Activated T-helper 1 cell treated with anti-CD3 and anti-CD28 coated beads, Interleukin-12 subunit alpha, Interleukin-12 subunit beta, Interleukin-2, Interleukin-4 antibody, amounts not matched to agents 30 ng/mL and 10 ng/mL and 1 ng/mL, durations not matched to agents 14 hours and 24 hours and 36 hours (primary cell): ENCODE measurements at regions of chr4 and their contacts with region 1.

Region 1: GRCh38 chr4:53015681-53016080 is 153.6 kb downstream of the RASL11B start:
- DNase-seq: no peak
- H3K4me3 Mint-ChIP-seq: no peak overlapping the region
- H3K27ac Mint-ChIP-seq: no peak overlapping the region
- H3K4me1 Mint-ChIP-seq: peaks cover 24% of the 10 kb centered on the region
- H3K27me3 Mint-ChIP-seq: no peaks in the 10 kb centered on the region

Region 2: GRCh38 chr4:52659001-52659721 is 356.5 kb before region 1 on chr4 and contains the start of gene USP46:
- intact Hi-C with region 1: no loop called
- DNase-seq: peak; percentile 30
- H3K4me3 Mint-ChIP-seq: peak within 1 kb of the TSS; percentile 86
- H3K27ac Mint-ChIP-seq: peak within 1 kb of the TSS; percentile 73
- H3K4me1 Mint-ChIP-seq: peaks cover 28% of the 10 kb centered on the region
- H3K27me3 Mint-ChIP-seq: peaks cover 14% of the 10 kb centered on the region
- total RNA-seq, gene USP46: 9.9 and 10.1 TPM in 2 replicates

Region 3: GRCh38 chr4:53037892-53038291 is 22.2 kb after region 1 on chr4:
- intact Hi-C with region 1: loop called (anchors 2 kb)
- DNase-seq: no peak
- H3K4me3 Mint-ChIP-seq: no peak overlapping the region
- H3K27ac Mint-ChIP-seq: no peak overlapping the region
- H3K4me1 Mint-ChIP-seq: peaks cover 6% of the 10 kb centered on the region
- H3K27me3 Mint-ChIP-seq: no peaks in the 10 kb centered on the region

Region 4: DNA sequence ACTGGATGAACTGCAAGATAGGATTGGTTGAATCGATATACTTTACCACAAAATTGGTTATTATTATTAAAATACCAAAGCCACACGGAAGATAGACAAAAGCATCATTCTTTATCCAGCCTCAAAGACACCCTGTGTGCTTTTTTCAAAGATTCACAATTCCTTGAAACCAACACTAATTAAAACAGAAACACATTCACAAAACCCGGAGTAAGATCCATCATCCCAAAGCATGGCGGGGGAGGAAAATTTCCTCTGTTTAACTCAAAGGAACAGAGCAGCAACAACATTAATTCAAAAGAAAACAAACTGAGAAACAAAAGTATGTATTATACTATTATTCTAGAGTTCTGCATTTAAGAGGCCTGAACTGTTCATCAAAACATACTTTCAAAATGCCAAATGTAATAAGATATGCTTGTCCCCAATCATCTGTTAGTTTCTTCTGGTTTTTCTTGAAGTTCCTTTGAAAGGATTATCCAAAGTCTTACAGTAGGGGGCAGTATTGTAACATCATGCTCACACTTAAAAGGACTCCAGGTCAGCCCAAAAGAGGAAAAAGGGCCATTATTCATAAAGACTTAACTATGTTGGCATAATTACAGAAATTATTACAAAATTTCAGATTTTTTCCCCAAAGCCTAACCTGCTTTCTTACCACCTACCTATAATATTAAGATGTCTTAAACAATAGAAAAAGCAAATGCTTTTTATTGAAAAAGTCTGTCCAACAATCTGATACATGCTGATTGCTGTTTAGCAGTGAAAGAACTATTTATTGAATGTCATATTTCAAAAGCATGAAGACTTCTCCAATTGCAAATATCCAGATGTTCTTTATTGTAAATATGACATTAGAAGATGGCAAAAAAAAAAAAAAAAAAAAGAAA is 181.4 kb after region 1 on chr4:
- intact Hi-C with region 1: loop called (anchors 1 kb)
- DNase-seq: no peak
- H3K4me3 Mint-ChIP-seq: no peak overlapping the region
- H3K27ac Mint-ChIP-seq: no peak overlapping the region
- H3K4me1 Mint-ChIP-seq: peaks cover 4% of the 10 kb centered on the region
- H3K27me3 Mint-ChIP-seq: no peaks in the 10 kb centered on the region

Region 5: DNA sequence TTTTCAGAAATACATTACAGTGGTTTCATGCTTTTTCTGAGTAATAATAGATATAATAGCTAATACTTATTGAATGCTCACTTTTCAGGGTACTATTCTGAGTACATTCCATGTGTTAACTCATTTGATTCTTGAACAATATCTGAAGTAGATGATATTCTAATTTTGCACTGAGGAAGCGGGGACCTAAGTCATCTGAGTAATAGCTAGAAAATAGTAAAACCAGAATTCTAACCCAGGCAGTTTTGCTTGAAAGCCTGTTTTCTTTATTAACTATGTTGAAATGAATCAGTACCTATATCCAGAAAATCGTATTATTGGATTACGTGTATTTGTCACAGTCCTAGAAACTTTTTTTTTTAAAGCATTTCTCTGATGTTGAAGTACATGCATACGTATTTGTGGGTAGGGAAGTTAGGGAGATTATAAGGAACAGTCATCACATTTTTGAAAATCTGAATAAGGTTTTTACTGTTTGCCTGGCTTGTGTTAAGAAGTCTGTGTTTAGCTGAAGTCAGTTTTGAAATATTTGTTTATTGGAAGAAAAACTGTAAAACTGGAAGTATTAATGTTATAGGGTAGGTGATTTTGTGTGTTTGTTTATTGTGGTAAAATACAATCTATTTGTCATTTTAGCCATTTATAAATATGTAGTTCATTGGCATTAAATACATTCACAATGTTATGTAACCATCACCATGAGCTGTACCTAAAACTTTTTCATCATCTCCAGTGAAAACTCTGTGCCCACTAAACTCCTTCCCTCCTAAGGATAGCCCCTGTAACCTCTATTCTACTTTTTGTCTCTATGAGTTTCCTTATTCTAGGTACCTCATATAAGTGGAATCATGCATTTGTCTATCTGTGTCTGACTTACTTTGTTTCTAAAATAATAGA is 417.1 kb after region 1 on chr4:
- intact Hi-C with region 1: loop called (anchors 10 kb)
- DNase-seq: no peak
- H3K4me3 Mint-ChIP-seq: no peak overlapping the region
- H3K27ac Mint-ChIP-seq: no peak overlapping the region
- H3K4me1 Mint-ChIP-seq: peaks cover 19% of the 10 kb centered on the region
- H3K27me3 Mint-ChIP-seq: no peaks in the 10 kb centered on the region

Region 6: GRCh38 chr4:53908661-53909078 is 893.0 kb after region 1 on chr4:
- intact Hi-C with region 1: loop called (anchors 10 kb)
- DNase-seq: no peak
- H3K4me3 Mint-ChIP-seq: no peak overlapping the region
- H3K27ac Mint-ChIP-seq: no peak overlapping the region
- H3K4me1 Mint-ChIP-seq: peaks cover 17% of the 10 kb centered on the region
- H3K27me3 Mint-ChIP-seq: peaks cover 30% of the 10 kb centered on the region